Prostate gland (tissue), 2 donors: ENCODE measurements at regions of chr9 and their contacts with region 1.

Region 1: DNA sequence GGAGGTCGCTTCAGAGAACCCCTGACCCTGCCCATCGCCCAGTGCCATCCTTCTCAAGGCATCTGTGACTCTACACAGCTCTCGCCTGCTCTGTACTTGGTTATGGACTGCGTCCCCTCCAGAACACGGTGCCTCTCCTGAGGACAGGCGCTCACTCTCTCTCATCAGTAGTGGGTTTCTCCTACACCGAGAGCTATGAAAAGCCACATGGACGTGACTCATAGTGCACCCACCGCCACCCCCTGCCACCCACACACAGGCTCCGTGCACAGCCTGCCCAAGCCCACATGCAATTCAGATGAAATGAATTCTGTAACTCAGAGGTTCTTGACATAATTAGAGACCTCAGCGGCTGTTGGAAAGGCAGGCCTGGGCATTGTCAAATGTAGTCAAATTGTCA is 13.9 kb downstream of the GTF3C5 start:
- DNase-seq: no peak
- H3K4me3 ChIP-seq: no peak overlapping the region
- H3K27ac ChIP-seq: no peak overlapping the region
- H3K4me1 ChIP-seq: no peaks in the 10 kb centered on the region
- H3K27me3 ChIP-seq: no peaks in the 10 kb centered on the region
- CTCF ChIP-seq: no peak
- POLR2A ChIP-seq: no peak

Region 2: DNA sequence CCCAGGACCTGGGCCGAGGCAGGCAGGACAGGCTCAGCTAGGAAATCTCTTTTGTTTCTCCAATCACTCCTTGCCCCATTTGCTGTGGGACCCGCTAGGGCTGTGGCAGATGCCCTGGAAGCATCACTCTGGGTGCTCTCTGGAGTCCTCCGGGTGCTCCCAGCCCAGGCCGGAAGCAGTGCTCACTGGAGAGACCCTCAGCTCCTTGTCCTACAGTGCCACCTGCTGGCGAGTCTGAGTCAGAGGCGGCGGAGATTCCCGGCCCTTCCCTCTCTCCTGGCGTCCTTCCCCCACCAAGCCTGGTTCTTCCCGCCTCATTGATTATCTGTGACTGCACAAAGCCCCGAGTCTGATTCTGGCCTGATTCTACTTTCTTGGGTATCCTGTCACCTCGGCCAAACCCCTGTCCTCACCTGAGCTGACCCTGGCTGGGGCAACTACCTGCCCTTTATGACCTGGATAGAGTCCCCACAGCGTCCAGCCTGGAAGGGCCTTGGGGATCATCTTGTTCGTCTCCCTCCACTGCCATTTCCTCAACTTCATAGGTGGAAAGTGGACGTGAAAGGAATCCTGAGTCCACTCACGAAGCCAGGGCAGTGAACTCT is 469.6 kb before region 1 on chr9:
- intact Hi-C with region 1: no loop called
- DNase-seq: peak; percentile 60
- H3K4me3 ChIP-seq: no peak overlapping the region
- H3K27ac ChIP-seq: no peak overlapping the region
- H3K4me1 ChIP-seq: no peaks in the 10 kb centered on the region
- H3K27me3 ChIP-seq: peaks cover 23% of the 10 kb centered on the region
- CTCF ChIP-seq: peak in 3 of 4 experiments; percentile 61 to 79 (median 75)
- POLR2A ChIP-seq: no peak

Region 3: DNA sequence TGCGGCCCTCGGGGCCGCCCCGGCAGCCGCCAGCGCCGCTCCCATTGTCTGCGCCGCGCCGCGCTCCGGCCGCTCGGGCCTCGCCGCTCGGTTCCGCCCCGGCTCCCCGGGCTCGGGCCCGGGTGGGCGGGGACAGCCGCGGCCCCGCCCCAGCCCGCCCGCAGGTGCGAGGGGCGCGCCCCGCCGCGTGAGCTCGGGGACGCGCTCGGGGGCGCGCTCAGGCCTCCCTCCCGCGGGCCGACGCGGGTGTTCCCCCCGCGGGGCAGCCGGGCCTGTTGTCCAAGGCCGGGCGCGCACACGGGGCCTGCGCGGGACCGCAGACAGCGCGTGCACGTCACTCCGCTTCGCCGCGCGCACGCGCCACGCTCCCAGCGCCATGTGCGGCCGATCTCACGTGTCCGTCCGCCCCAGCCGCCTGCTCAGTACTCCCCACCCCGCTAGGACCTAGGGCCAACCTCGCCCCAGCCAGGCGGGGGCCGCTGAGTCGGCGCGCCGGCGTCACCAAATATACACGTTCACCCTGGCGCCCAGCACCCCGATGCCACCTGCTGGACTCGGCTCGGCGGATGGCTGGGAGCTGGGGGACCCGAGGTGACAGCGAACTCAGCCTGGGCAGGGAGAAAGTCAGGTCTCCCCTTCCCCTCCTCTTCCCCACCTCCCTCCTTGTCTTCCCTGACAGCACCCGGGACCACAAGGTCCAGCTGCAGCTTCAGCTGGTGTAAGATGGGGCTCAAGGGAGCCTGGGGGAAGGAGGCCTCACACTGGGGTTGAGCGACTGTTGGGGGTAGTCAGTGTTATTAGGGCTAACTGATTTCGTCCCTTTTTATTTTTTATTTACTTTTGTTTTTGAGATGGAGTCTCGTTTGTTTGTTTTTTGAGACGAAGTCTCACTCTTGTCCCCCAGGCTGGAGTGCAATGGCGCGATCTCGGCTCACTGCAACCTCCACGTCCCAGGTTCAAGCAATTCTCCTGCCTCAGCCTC is 104.8 kb after region 1 on chr9:
- intact Hi-C with region 1: loop called (anchors 5 kb)
- DNase-seq: peak; percentile 88
- H3K4me3 ChIP-seq: peak overlapping the region; percentile 46 to 63
- H3K27ac ChIP-seq: peak overlapping the region; percentile 85 to 87
- H3K4me1 ChIP-seq: peaks cover 5% of the 10 kb centered on the region
- H3K27me3 ChIP-seq: no peaks in the 10 kb centered on the region
- CTCF ChIP-seq: peak in 2 of 4 experiments; percentile 54 to 62
- POLR2A ChIP-seq: peak; percentile 69